PC-9 (cell line): ENCODE measurements at regions of chr6 and their contacts with region 1.

Region 1: GRCh38 chr6:37691904-37692806 is 5.5 kb downstream of the MDGA1 start:
- DNase-seq: peak; percentile 58 to 82
- H3K4me3 ChIP-seq: no peak overlapping the region
- H3K27ac ChIP-seq: no peak overlapping the region
- H3K4me1 ChIP-seq: peaks cover 4% of the 10 kb centered on the region; the same call in 1 of the 2 replicates
- H3K27me3 ChIP-seq: peaks cover 27% of the 10 kb centered on the region
- CTCF ChIP-seq: peak; percentile 99

Region 2: GRCh38 chr6:37381579-37381978 is 310.6 kb before region 1 on chr6:
- CTCF ChIA-PET with region 1: no interaction called
- POLR2A ChIA-PET with region 1: no interaction called
- intact Hi-C with region 1: loop called (anchors 2 kb)
- DNase-seq: peak; percentile 48 to 84
- H3K4me3 ChIP-seq: no peak overlapping the region
- H3K27ac ChIP-seq: no peak overlapping the region
- H3K4me1 ChIP-seq: no peaks in the 10 kb centered on the region
- H3K27me3 ChIP-seq: no peaks in the 10 kb centered on the region
- CTCF ChIP-seq: peak; percentile 80

Region 3: GRCh38 chr6:37538107-37538506 is 154.0 kb before region 1 on chr6:
- CTCF ChIA-PET with region 1: interaction called, 7 read pairs
- POLR2A ChIA-PET with region 1: no interaction called
- intact Hi-C with region 1: loop called (anchors 1 kb)
- DNase-seq: peak in 1 of 2 experiments; percentile 50
- H3K4me3 ChIP-seq: no peak overlapping the region
- H3K27ac ChIP-seq: no peak overlapping the region
- H3K4me1 ChIP-seq: no peaks in the 10 kb centered on the region
- H3K27me3 ChIP-seq: no peaks in the 10 kb centered on the region
- CTCF ChIP-seq: peak; percentile 69

Region 4: DNA sequence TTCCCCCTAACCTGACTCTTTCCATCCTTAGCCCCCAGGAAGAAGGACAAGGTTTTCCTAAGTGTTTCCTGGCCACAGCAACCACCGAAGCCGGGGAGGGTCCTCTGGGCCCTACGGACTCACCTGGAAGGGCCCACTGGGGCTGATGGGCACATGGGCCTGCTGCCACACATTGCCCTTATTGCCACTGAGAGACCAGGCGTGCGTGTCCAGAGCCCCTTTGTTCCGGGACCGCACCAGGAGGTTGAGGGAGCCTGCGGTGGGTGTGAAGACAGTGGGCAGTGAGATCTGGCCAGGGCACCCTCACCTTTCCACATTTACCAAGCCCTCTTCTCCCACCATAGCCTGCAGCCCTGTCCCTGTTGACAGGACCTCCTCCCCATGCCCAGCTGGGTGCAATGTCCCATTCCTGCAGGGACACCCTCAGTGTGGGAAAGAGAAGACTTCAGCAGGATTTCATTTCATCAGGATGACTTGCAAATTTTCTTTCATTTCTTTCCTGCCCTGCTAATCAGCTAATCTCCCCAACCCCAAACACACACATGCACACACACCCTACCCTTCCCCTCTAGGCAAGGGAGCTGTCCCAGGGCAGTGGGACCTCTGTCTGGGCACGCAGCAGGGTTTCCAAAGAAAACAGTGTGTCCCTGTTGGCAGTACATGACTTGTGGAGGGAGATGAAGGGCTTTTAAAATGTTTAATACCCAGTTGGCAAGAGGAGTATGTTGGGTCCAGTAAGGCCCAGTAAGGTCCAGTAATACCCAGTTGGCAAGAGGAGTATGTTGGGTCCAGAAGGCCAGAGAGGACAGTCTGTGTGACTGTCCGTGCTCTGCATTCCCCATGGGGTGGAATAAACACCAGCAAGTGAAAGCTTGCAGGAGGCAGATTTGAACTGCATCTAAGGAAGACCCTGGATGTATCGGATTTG is 53.5 kb before region 1 on chr6:
- CTCF ChIA-PET with region 1: interaction called, 3 read pairs
- POLR2A ChIA-PET with region 1: interaction called, 11 read pairs
- intact Hi-C with region 1: loop called (anchors 5 kb)
- DNase-seq: peak; percentile 69 to 82
- H3K4me3 ChIP-seq: no peak overlapping the region
- H3K27ac ChIP-seq: peak overlapping the region; percentile 85
- H3K4me1 ChIP-seq: peaks cover 37% of the 10 kb centered on the region
- H3K27me3 ChIP-seq: no peaks in the 10 kb centered on the region
- CTCF ChIP-seq: no peak

Region 5: GRCh38 chr6:38493931-38494547 is 801.9 kb after region 1 on chr6:
- CTCF ChIA-PET with region 1: no interaction called
- POLR2A ChIA-PET with region 1: no interaction called
- intact Hi-C with region 1: loop called (anchors 5 kb)
- DNase-seq: peak; percentile 56 to 71
- H3K4me3 ChIP-seq: no peak overlapping the region
- H3K27ac ChIP-seq: no peak overlapping the region
- H3K4me1 ChIP-seq: no peaks in the 10 kb centered on the region
- H3K27me3 ChIP-seq: no peaks in the 10 kb centered on the region
- CTCF ChIP-seq: peak; percentile 97

Region 6: DNA sequence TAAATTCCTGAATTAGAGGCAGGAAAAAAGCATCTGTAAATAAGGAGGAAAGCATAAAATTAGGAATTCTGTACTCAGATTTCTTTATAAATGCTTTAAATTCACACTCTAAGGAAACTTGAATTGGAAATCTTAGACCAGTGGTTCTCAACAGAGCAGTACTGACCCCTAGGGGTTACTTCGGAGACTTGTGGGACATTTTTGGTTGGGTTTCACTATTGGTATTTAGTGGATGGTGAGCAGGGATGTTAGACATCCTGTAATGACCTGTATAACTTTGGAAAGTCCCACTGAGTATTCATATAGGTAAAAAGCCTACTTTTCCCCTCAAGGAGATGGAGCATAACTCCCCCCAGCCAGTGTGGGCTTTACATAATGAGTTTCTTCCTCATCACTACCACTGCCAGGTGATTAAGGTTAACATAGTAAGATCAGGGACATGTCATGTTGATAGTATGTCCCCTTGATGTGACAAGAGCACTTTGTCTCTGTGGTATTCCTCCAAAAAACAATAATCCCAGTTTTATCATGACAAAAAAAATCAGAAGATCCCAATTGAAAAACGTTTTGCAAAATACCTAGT is 979.8 kb after region 1 on chr6:
- CTCF ChIA-PET with region 1: no interaction called
- POLR2A ChIA-PET with region 1: no interaction called
- intact Hi-C with region 1: loop called (anchors 10 kb)
- DNase-seq: peak; percentile 17 to 42
- H3K4me3 ChIP-seq: no peak overlapping the region
- H3K27ac ChIP-seq: no peak overlapping the region
- H3K4me1 ChIP-seq: no peaks in the 10 kb centered on the region
- H3K27me3 ChIP-seq: no peaks in the 10 kb centered on the region
- CTCF ChIP-seq: peak; percentile 78